ENCODE measurements at regions of chr20 and their contacts with region 1.

Region 1: GRCh38 chr20:52991830-52992229 is 19.7 kb downstream of the TSHZ2 start:
- DNase-seq: no peak
- ATAC-seq: no peak

Region 2: GRCh38 chr20:52880259-52880658 is 111.6 kb before region 1 on chr20:
- intact Hi-C with region 1: no loop called
- DNase-seq: no peak
- ATAC-seq: no peak

Region 3: DNA sequence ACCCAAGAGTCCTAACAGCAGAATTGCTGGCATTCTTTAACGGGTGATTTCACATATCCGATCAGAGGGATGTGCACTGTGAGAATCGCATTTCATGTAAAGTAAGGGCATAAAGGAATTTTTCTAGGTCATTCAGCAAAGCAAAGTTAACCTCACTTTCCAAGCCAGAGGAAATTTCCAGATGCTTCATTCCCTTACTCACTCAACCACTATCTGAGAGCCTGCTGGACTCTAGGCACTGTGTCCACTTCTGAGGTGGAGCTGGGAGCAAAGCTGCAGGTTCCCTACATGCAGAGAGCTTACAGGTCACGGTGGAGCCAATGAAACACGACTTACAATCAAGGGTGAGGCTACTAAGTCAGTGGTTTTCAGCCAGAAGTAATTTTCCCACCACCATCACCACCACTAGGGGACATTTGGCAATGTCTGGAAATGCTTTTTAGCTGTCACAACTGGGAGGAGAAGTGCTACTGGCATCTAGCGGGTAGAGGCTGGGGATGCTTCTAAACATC is 54.2 kb before region 1 on chr20:
- intact Hi-C with region 1: loop called in 1 of 2 experiments (anchors 10 kb)
- DNase-seq: no peak
- ATAC-seq: no peak

Measured in left cardiac atrium (tissue), 4 donors.